ENCODE measurements at regions of chr21 and their contacts with region 1.

Region 1: GRCh38 chr21:32257962-32258785 is 20.7 kb downstream of the MIS18A start:
- DNase-seq: peak in 4 of 5 donors; percentile 63 to 76 (median 68)
- ATAC-seq: peak; percentile 68 to 87 (median 78)
- H3K4me3 ChIP-seq: no peak overlapping the region
- H3K27ac ChIP-seq: no peak overlapping the region
- H3K4me1 ChIP-seq: peaks cover 0 to 30% (median 12%) of the 10 kb centered on the region in 12 donors
- H3K27me3 ChIP-seq: no peaks in the 10 kb centered on the region
- CTCF ChIP-seq: peak; percentile 48 to 81 (median 75)
- POLR2A ChIP-seq: no peak

Region 2: DNA sequence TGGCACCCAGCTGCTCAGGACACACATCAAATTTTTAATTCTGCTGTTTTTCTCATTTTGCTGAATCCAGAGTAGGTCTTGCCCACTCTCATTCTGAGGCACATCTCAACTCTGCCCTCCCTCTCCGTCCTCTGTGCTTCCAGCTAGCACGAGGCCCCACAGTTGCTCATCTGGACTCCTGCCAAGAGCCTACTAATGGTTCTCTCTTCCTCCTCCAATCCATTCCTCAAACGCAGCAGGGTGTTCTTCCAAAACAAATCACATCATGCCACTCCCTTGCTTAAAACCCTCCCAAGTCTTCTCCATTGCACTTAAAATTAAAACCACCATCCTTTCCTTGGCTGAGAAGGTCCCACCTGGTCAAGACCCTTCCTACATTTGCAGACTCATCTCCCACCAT is 476.4 kb before region 1 on chr21:
- intact Hi-C with region 1: loop called in 9 of 10 experiments (anchors 1 to 5 kb)
- DNase-seq: peak in 4 of 5 donors; percentile 27 to 58 (median 46)
- ATAC-seq: peak in 3 of 4 donors; percentile 56 to 69 (median 58)
- H3K4me3 ChIP-seq: no peak overlapping the region
- H3K27ac ChIP-seq: no peak overlapping the region
- H3K4me1 ChIP-seq: peaks cover 0 to 6% (median 0%) of the 10 kb centered on the region in 12 donors
- H3K27me3 ChIP-seq: no peaks in the 10 kb centered on the region
- CTCF ChIP-seq: no peak
- POLR2A ChIP-seq: no peak

Region 3: GRCh38 chr21:31866077-31866511 is 392.1 kb before region 1 on chr21:
- intact Hi-C with region 1: loop called (anchors 1 to 5 kb)
- DNase-seq: peak; percentile 84 to 91 (median 89)
- ATAC-seq: peak; percentile 92 to 96 (median 94)
- H3K4me3 ChIP-seq: no peak overlapping the region
- H3K27ac ChIP-seq: no peak overlapping the region
- H3K4me1 ChIP-seq: peaks cover 0 to 9% (median 4%) of the 10 kb centered on the region in 12 donors
- H3K27me3 ChIP-seq: peaks cover 0 to 17% (median 0%) of the 10 kb centered on the region in 9 donors
- CTCF ChIP-seq: peak; percentile 82 to 95 (median 91)
- POLR2A ChIP-seq: no peak

Region 4: GRCh38 chr21:31991356-31992331 is 266.5 kb before region 1 on chr21:
- intact Hi-C with region 1: loop called in 4 of 10 experiments (anchors 5 to 10 kb)
- DNase-seq: no peak
- ATAC-seq: no peak
- H3K4me3 ChIP-seq: no peak overlapping the region
- H3K27ac ChIP-seq: no peak overlapping the region
- H3K4me1 ChIP-seq: peaks cover 0 to 11% (median 0%) of the 10 kb centered on the region in 12 donors
- H3K27me3 ChIP-seq: no peaks in the 10 kb centered on the region
- CTCF ChIP-seq: peak in 3 of 12 donors; percentile 9 to 19 (median 12)
- POLR2A ChIP-seq: no peak

Region 5: GRCh38 chr21:32207406-32207716 is 50.8 kb before region 1 on chr21:
- intact Hi-C with region 1: loop called in 1 of 10 experiments (anchors 10 kb)
- DNase-seq: no peak
- ATAC-seq: no peak
- H3K4me3 ChIP-seq: no peak overlapping the region
- H3K27ac ChIP-seq: no peak overlapping the region
- H3K4me1 ChIP-seq: peaks cover 0 to 3% (median 0%) of the 10 kb centered on the region in 12 donors
- H3K27me3 ChIP-seq: no peaks in the 10 kb centered on the region
- CTCF ChIP-seq: no peak
- POLR2A ChIP-seq: no peak

Measured in heart left ventricle (tissue), 16 donors.